Caco-2 (cell line): ENCODE measurements at regions of chr2 and their contacts with region 1.

Region 1: GRCh38 chr2:113138428-113139322 is 11.3 kb downstream of the IL1RN start:
- DNase-seq: peak; percentile 67 to 84
- H3K4me3 ChIP-seq: peak overlapping the region; percentile 27
- H3K4me3 Mint-ChIP-seq: peak overlapping the region; percentile 59
- H3K27ac Mint-ChIP-seq: peak overlapping the region; percentile 61
- H3K4me1 ChIP-seq: peaks cover 12% of the 10 kb centered on the region
- H3K4me1 Mint-ChIP-seq: peaks cover 12% of the 10 kb centered on the region
- H3K27me3 ChIP-seq: no peaks in the 10 kb centered on the region
- H3K27me3 Mint-ChIP-seq: no peaks in the 10 kb centered on the region
- CTCF ChIP-seq: peak; percentile 80 to 81

Region 2: DNA sequence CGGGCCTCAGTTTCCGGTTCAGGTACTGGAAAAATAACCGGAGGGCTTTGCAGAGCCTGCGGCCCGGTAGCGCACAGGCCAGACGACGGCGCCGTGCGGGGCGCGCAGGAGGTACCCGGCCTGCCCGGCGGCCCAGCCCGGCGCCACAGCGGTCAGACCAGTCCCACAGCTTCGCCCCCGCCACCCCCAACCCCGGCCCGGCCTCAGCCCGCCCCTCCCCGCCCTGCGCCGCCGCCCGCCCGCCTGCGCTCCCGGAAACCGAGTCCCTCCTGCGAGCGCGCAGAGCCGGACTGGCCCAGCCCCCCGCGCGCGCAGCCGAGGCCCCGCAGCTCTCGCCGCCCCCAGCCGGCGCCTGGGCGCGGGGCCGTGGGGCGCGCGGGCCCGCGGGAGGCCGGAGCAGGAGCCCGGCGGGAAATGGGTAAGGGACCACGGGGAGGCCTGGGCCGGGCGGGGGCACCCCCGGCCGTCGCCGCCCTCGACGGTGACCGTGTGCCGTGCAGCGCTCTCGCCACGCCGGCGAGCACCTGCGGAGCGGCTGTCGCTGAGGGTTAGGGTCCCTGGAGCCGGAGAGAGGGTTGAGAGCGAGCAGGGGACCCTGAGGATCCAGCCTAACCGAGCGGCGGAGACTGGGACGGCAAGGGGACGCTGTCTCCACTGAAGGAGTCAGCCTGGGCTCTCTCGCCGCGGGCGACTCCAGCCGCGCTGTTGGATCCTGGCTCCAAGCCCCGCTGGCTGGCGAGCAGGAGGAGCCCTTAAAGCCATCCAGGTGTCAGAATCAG is 18.6 kb after region 1 on chr2:
- CTCF ChIA-PET with region 1: interaction called, 50 read pairs
- POLR2A ChIA-PET with region 1: interaction called, 3 read pairs
- intact Hi-C with region 1: loop called (anchors 1 kb)
- DNase-seq: peak; percentile 87 to 88
- H3K4me3 ChIP-seq: peak overlapping the region; percentile 80
- H3K4me3 Mint-ChIP-seq: peak overlapping the region; percentile 75
- H3K27ac Mint-ChIP-seq: peak overlapping the region; percentile 33
- H3K4me1 ChIP-seq: peaks cover 22% of the 10 kb centered on the region
- H3K4me1 Mint-ChIP-seq: peaks cover 5% of the 10 kb centered on the region
- H3K27me3 ChIP-seq: no peaks in the 10 kb centered on the region
- H3K27me3 Mint-ChIP-seq: no peaks in the 10 kb centered on the region
- CTCF ChIP-seq: no peak

Region 3: GRCh38 chr2:113181258-113182051 is 42.8 kb after region 1 on chr2:
- CTCF ChIA-PET with region 1: interaction called, 44 read pairs
- POLR2A ChIA-PET with region 1: no interaction called
- intact Hi-C with region 1: loop called (anchors 1 kb)
- DNase-seq: no peak
- H3K4me3 ChIP-seq: no peak overlapping the region
- H3K4me3 Mint-ChIP-seq: no peak overlapping the region
- H3K27ac Mint-ChIP-seq: no peak overlapping the region
- H3K4me1 ChIP-seq: peaks cover 31% of the 10 kb centered on the region
- H3K4me1 Mint-ChIP-seq: peaks cover 10% of the 10 kb centered on the region
- H3K27me3 ChIP-seq: no peaks in the 10 kb centered on the region; the same call in 1 of the 2 replicates
- H3K27me3 Mint-ChIP-seq: no peaks in the 10 kb centered on the region
- CTCF ChIP-seq: no peak

Region 4: GRCh38 chr2:113198790-113199612 is 60.3 kb after region 1 on chr2:
- CTCF ChIA-PET with region 1: interaction called, 78 read pairs
- POLR2A ChIA-PET with region 1: interaction called, 8 read pairs
- intact Hi-C with region 1: loop called (anchors 1 kb)
- DNase-seq: peak; percentile 90 to 97
- H3K4me3 ChIP-seq: peak overlapping the region; percentile 62
- H3K4me3 Mint-ChIP-seq: peak overlapping the region; percentile 81
- H3K27ac Mint-ChIP-seq: peak overlapping the region; percentile 83
- H3K4me1 ChIP-seq: peaks cover 16% of the 10 kb centered on the region
- H3K4me1 Mint-ChIP-seq: peaks cover 1% of the 10 kb centered on the region
- H3K27me3 ChIP-seq: no peaks in the 10 kb centered on the region
- H3K27me3 Mint-ChIP-seq: no peaks in the 10 kb centered on the region
- CTCF ChIP-seq: peak; percentile 89 to 92

Region 5: DNA sequence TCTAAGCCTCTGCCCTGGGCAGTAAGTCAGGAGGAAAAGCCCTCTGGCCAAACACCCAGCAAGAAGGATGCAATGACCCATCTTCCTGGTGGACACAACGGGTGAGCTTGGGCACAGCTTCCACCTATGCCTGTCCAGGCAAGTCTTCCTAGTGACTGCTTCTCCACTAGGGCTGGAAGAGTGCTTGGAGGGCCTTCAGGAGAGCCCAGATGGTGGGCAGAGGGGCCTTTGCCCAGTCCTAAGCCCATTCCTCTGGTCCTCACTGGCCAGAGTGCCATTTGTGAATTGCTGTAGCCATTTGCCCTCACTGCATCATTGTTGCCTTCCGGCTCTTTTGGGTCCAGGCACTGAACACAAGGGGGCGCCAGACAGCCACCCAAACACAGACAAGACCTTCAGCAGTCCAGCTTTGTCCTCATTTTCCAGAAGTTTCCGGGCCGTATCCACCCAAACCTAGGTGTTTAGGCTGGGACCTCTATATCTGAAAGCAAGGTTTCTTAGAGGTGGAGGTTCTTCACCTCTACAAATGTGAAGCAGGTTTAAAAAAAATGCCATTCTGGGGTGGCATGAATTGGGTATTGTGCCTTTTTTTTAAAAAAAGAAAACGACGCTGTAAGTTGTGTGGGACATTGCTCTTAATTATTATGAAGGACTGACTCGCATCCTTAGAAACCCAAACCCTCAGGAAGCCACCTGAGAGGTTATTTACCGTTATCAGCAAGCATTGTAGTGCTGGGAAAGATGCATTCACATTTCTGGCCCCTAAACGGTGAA is 110.5 kb after region 1 on chr2:
- CTCF ChIA-PET with region 1: interaction called, 8 read pairs
- POLR2A ChIA-PET with region 1: no interaction called
- intact Hi-C with region 1: loop called (anchors 5 kb)
- DNase-seq: peak; percentile 78 to 81
- H3K4me3 ChIP-seq: no peak overlapping the region
- H3K4me3 Mint-ChIP-seq: no peak overlapping the region
- H3K27ac Mint-ChIP-seq: no peak overlapping the region
- H3K4me1 ChIP-seq: peaks cover 15% of the 10 kb centered on the region; the same call in 1 of the 2 replicates
- H3K4me1 Mint-ChIP-seq: peaks cover 20% of the 10 kb centered on the region
- H3K27me3 ChIP-seq: no peaks in the 10 kb centered on the region
- H3K27me3 Mint-ChIP-seq: no peaks in the 10 kb centered on the region
- CTCF ChIP-seq: peak; percentile 91

Region 6: GRCh38 chr2:113324684-113325160 is 186.0 kb after region 1 on chr2:
- CTCF ChIA-PET with region 1: no interaction called
- POLR2A ChIA-PET with region 1: no interaction called
- intact Hi-C with region 1: no loop called
- DNase-seq: peak; percentile 81 to 83
- H3K4me3 ChIP-seq: peak overlapping the region; percentile 60
- H3K4me3 Mint-ChIP-seq: peak overlapping the region; percentile 68
- H3K27ac Mint-ChIP-seq: peak overlapping the region; percentile 33
- H3K4me1 ChIP-seq: peaks cover 19% of the 10 kb centered on the region
- H3K4me1 Mint-ChIP-seq: peaks cover 42% of the 10 kb centered on the region
- H3K27me3 ChIP-seq: no peaks in the 10 kb centered on the region
- H3K27me3 Mint-ChIP-seq: no peaks in the 10 kb centered on the region
- CTCF ChIP-seq: no peak

Region 7: DNA sequence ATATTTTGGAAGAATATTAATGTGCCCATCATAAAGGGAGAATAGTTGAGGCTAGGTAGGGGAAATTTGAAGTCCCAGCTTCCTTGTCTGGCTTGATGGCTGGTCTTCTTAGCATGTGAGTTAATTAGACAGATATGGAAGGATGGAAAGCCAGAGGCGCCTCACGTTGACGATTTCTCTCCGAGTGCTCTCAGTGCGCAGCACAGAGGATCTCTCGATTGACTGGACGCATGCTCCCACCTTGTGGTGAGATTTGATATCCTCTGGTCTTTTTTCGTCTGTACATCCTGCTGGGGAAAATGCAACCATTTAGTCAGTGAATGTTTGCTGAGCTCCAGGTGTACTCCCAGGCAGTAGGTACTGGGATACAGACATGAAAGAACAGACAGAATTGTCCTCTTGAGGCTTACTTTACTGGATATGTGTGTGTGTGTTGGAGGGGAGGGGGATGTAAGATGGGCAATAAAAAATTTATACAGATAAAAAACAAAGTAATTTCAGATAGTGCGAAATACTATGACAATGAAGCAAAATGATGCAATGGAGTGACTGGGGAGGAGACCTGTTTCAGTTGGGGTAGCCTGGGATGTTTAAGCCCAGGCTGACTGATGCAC is 231.9 kb after region 1 on chr2:
- CTCF ChIA-PET with region 1: interaction called, 15 read pairs
- POLR2A ChIA-PET with region 1: no interaction called
- intact Hi-C with region 1: loop called (anchors 1 kb)
- DNase-seq: peak; percentile 84 to 85
- H3K4me3 ChIP-seq: no peak overlapping the region
- H3K4me3 Mint-ChIP-seq: no peak overlapping the region
- H3K27ac Mint-ChIP-seq: no peak overlapping the region
- H3K4me1 ChIP-seq: peaks cover 19% of the 10 kb centered on the region
- H3K4me1 Mint-ChIP-seq: peaks cover 22% of the 10 kb centered on the region
- H3K27me3 ChIP-seq: no peaks in the 10 kb centered on the region
- H3K27me3 Mint-ChIP-seq: no peaks in the 10 kb centered on the region
- CTCF ChIP-seq: peak; percentile 63 to 84

Region 8: DNA sequence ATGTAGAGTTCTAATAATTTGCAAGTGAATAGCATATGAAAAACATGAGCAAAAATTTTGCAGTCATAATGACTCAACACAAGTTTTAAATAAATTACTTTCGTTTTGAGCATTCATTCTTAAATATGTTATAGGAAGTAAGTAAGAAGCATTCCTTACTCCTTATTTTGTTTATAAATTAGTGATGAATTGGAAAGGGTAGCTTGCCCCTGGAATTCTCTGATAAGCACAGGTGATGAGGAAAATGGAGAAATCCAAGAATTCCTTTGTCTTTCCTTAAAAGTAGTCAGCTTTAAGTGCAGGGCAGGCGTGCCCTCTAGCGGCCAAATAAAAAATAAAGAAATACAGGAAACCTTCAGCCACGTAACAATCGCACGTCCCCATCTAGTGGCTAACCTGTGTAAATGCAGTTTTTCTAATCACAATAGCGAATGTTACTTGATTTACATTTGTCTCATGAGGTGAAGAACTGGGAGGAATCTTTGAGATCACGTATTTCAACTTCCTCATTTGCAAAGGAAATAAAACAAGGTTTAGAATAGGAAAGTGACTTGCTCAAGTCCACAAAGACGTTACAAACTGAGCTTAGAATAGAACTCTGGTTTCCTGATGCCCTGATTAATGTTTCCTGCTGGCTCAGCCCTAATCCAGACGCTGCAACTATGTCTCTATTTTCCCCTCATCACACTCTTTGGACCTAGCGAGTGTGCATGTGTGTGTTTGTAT is 251.6 kb after region 1 on chr2:
- CTCF ChIA-PET with region 1: interaction called, 16 read pairs
- POLR2A ChIA-PET with region 1: no interaction called
- intact Hi-C with region 1: loop called (anchors 1 kb)
- DNase-seq: peak; percentile 76 to 84
- H3K4me3 ChIP-seq: no peak overlapping the region
- H3K4me3 Mint-ChIP-seq: no peak overlapping the region
- H3K27ac Mint-ChIP-seq: no peak overlapping the region
- H3K4me1 ChIP-seq: no peaks in the 10 kb centered on the region
- H3K4me1 Mint-ChIP-seq: no peaks in the 10 kb centered on the region
- H3K27me3 ChIP-seq: no peaks in the 10 kb centered on the region
- H3K27me3 Mint-ChIP-seq: no peaks in the 10 kb centered on the region
- CTCF ChIP-seq: peak; percentile 85 to 95